ENCODE measurements at regions of chr13 and their contacts with region 1.

Region 1: DNA sequence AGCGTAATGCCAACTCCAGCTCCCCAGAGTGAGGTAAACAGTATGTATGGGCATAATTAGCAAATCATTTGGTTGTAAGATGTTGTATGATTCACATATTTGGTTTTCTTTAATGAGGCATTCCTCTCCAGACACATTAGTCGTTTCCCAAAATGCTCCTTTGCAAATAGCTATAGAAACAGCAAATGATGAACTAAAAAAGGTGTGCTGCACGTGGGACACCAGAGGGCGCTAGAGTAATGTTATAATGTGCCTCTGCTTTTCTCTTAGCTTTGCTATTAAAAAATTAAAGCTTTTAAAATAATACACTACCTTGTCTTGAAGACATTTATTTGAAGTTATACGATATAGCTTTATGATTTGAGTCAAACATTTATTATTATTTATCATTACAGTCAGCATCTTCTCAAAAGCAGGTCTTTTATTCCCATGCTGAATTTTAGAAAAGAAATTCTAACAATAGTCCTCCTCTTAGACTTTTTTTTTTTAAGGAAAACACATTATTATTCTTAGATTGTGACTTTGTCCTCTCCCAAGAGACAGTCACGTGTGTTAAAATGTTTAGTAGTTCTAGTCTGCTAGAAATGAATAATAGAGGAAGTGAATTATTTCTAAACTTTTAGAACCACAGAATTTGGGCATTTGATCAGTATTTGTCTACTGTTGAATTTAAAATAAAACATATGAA is 121.6 kb upstream of the FRY start:
- DNase-seq: peak; percentile 46
- H3K4me3 ChIP-seq: no peak overlapping the region
- H3K27ac ChIP-seq: no peak overlapping the region
- H3K4me1 ChIP-seq: peaks cover 0 to 15% (median 0%) of the 10 kb centered on the region in 4 donors
- H3K27me3 ChIP-seq: no peaks in the 10 kb centered on the region
- CTCF ChIP-seq: peak; percentile 70 to 89 (median 84)
- EP300 ChIP-seq: no peak
- POLR2A ChIP-seq: no peak

Region 2: DNA sequence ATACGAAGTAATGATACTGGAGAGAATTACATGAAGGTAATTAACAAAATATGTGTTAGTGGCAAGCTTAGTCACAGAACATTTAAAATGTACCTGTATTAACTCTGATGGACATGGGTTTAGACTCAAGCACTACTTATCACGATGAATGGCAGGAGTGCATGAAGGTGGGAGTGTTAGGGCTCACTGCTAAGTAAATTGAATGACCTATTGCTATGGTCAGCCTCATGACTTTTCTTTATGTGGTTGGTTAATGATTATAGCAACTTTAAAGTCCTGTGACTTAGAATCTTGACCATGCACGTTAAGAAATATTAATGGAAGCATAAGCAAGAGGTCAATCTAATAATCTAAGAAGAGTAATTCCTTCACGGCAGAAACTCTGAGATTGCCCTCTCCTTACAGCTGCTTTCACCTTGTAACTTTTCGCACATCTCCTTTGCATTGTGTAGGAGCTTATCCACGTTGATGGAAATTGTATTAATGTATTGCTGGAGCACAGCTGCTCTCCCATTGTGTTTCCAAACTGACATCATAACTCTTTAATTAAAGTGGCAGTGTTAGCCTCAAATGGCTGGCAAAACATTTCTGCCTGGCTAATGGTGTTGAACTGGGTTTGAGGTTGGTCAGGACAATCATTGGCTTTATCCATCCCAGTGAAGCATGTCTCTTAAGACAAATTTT is 56.2 kb before region 1 on chr13:
- in situ Hi-C with region 1: no loop called
- intact Hi-C with region 1: no loop called
- DNase-seq: no peak
- H3K4me3 ChIP-seq: no peak overlapping the region
- H3K27ac ChIP-seq: no peak overlapping the region
- H3K4me1 ChIP-seq: no peaks in the 10 kb centered on the region
- H3K27me3 ChIP-seq: no peaks in the 10 kb centered on the region
- CTCF ChIP-seq: no peak
- EP300 ChIP-seq: no peak
- POLR2A ChIP-seq: no peak

Region 3: DNA sequence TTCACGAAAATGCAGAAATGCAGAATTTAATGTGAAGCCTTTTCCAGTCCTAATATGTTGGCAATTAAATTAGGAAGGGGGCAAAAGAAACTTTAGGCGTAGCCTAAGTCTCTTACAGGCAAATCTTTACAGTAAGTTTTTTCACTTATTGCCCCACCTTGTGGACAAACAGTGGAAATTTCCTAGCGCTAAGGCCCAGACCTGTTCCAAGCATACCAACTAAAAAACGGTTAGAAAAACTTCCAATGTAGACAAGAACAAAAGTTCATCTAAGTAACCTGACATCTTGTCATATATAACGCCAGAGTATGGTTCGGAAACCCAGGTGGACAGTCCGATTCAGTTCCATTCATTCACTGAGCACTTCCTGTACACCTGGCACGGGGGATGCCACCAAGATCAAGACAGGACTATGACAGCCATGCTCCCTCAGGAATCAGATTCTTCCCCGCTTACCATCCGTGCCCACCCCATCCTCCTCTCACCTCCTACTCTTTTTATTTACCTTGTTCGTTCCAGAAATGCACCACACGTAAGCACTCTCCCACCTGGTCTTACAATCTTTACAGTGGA is 400.2 kb after region 1 on chr13:
- in situ Hi-C with region 1: loop called (anchors 10 to 25 kb)
- intact Hi-C with region 1: loop called (anchors 2 kb)
- DNase-seq: no peak
- H3K4me3 ChIP-seq: peak overlapping the region in 2 of 4 donors; percentile 2 to 40
- H3K27ac ChIP-seq: peak overlapping the region in 3 of 4 donors; percentile 23 to 43 (median 35)
- H3K4me1 ChIP-seq: peaks cover 0 to 15% (median 8%) of the 10 kb centered on the region in 4 donors
- H3K27me3 ChIP-seq: no peaks in the 10 kb centered on the region
- CTCF ChIP-seq: peak; percentile 69 to 88 (median 72)
- EP300 ChIP-seq: no peak
- POLR2A ChIP-seq: no peak

Region 4: DNA sequence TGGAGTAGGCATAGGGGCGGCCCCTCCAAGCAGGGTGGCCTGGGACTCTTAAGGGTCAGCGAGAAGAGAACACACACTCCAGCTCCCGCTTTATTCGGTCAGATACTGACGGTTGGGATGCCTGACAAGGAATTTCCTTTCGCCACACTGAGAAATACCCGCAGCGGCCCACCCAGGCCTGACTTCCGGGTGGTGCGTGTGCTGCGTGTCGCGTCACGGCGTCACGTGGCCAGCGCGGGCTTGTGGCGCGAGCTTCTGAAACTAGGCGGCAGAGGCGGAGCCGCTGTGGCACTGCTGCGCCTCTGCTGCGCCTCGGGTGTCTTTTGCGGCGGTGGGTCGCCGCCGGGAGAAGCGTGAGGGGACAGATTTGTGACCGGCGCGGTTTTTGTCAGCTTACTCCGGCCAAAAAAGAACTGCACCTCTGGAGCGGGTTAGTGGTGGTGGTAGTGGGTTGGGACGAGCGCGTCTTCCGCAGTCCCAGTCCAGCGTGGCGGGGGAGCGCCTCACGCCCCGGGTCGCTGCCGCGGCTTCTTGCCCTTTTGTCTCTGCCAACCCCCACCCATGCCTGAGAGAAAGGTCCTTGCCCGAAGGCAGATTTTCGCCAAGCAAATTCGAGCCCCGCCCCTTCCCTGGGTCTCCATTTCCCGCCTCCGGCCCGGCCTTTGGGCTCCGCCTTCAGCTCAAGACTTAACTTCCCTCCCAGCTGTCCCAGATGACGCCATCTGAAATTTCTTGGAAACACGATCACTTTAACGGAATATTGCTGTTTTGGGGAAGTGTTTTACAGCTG is 405.4 kb after region 1 on chr13 and contains the starts of genes BRCA2 and ZAR1L:
- in situ Hi-C with region 1: loop called in 2 of 4 experiments (anchors 25 kb)
- intact Hi-C with region 1: loop called (anchors 2 kb)
- DNase-seq: peak; percentile 91
- H3K4me3 ChIP-seq: peak within 1 kb of the TSS; percentile 63 to 86 (median 78)
- H3K27ac ChIP-seq: peak within 1 kb of the TSS; percentile 88 to 95 (median 92)
- H3K4me1 ChIP-seq: peaks cover 3 to 13% (median 8%) of the 10 kb centered on the region in 4 donors
- H3K27me3 ChIP-seq: no peaks in the 10 kb centered on the region
- CTCF ChIP-seq: no peak
- EP300 ChIP-seq: no peak
- POLR2A ChIP-seq: peak; percentile 79
- total RNA-seq, gene BRCA2: 1.6 to 4.8 (median 2.4) TPM in 3 of 4 donors, not detected in the other
- total RNA-seq, gene ZAR1L: not detected

Region 5: DNA sequence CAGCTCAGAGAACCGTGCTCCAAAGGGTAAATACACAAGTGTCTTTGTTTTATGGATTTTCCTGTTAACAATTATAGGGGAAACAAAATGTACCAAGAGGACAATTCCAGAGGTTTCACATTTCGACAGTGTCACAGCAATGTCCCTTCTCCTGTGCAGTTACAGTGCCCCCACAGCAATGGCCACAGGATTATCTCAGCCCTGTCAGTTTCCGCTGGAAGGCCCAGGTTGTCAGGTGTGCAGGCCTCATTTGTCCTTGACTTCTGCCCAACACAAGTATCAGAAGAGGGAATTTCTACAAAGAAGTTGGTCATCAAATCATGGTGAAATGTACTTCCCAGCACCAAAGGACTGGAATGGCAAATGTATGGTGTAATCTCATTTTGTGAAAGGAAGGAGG is 639.8 kb after region 1 on chr13:
- in situ Hi-C with region 1: loop called in 1 of 4 experiments (anchors 25 kb)
- intact Hi-C with region 1: no loop called
- DNase-seq: no peak
- H3K4me3 ChIP-seq: no peak overlapping the region
- H3K27ac ChIP-seq: no peak overlapping the region
- H3K4me1 ChIP-seq: no peaks in the 10 kb centered on the region
- H3K27me3 ChIP-seq: no peaks in the 10 kb centered on the region
- CTCF ChIP-seq: no peak
- EP300 ChIP-seq: no peak
- POLR2A ChIP-seq: no peak

Region 6: DNA sequence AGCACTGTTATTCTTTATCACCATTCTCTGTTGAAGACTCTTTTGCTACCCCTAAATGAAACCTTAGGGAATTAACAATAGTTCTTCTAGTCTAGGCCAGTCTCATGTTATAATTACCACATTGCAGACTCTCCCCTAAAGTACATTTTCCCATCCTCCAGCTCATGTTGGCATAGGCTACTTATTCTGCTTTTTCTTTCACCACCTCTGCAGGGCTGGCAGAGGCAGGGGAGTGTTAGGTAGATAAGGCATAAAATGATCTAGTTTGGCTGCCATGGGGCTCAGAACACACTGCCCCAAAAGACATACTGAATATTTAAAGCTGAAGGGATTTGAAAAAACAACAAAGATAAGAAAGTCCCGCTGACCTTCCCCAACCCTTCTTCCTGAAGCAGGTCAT is 1825.3 kb after region 1 on chr13:
- in situ Hi-C with region 1: no loop called
- intact Hi-C with region 1: loop called (anchors 5 kb)
- DNase-seq: no peak
- H3K4me3 ChIP-seq: no peak overlapping the region
- H3K27ac ChIP-seq: no peak overlapping the region
- H3K4me1 ChIP-seq: no peaks in the 10 kb centered on the region
- H3K27me3 ChIP-seq: no peaks in the 10 kb centered on the region
- CTCF ChIP-seq: no peak
- EP300 ChIP-seq: no peak
- POLR2A ChIP-seq: no peak